Body of pancreas (tissue), 4 donors: ENCODE measurements at regions of chr5 and their contacts with region 1.

Region 1: DNA sequence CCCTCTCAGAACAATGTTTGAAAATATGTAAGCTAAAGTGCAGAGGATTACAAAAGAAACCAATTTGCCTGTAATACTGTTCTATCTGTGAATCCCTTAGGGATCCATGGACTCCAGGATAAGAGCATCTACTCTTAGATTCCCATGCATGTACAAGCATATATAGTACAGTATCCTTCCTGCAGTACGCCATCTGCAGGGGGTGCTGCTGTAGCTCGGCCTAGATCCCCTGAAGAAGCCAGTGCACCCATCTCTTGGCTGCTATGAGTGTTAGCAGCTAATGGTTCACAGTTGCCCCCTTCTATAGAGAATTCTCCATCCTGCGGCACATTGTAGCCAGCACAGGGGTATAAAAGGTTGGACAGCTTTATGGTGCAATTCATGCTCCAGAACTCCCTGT is 61.8 kb upstream of the SLC30A5 start:
- DNase-seq: no peak
- ATAC-seq: no peak
- H3K4me3 ChIP-seq: no peak overlapping the region
- H3K27ac ChIP-seq: no peak overlapping the region
- H3K4me1 ChIP-seq: no peaks in the 10 kb centered on the region
- H3K27me3 ChIP-seq: no peaks in the 10 kb centered on the region
- CTCF ChIP-seq: no peak
- POLR2A ChIP-seq: no peak

Region 2: GRCh38 chr5:69093771-69094482 is 61.9 kb after region 1 on chr5 and contains the start of gene SLC30A5:
- intact Hi-C with region 1: no loop called
- DNase-seq: peak; percentile 99 to 100 (median 100)
- ATAC-seq: peak; percentile 99
- H3K4me3 ChIP-seq: peak within 1 kb of the TSS; percentile 77 to 85
- H3K27ac ChIP-seq: peak within 1 kb of the TSS; percentile 88 to 98 (median 96)
- H3K4me1 ChIP-seq: peaks cover 30% of the 10 kb centered on the region
- H3K27me3 ChIP-seq: no peaks in the 10 kb centered on the region
- CTCF ChIP-seq: peak; percentile 83 to 100 (median 99)
- POLR2A ChIP-seq: peak; percentile 95 to 97 (median 96)
- total RNA-seq, gene SLC30A5: 30.3 to 35.0 TPM

Region 3: GRCh38 chr5:69334793-69335268 is 302.8 kb after region 1 on chr5:
- intact Hi-C with region 1: loop called (anchors 10 kb)
- DNase-seq: peak; percentile 90 to 95 (median 91)
- ATAC-seq: peak; percentile 80
- H3K4me3 ChIP-seq: no peak overlapping the region
- H3K27ac ChIP-seq: peak overlapping the region in 3 of 4 donors; percentile 67 to 88 (median 86)
- H3K4me1 ChIP-seq: peaks cover 37% of the 10 kb centered on the region
- H3K27me3 ChIP-seq: no peaks in the 10 kb centered on the region
- CTCF ChIP-seq: peak; percentile 71 to 92 (median 88)
- POLR2A ChIP-seq: peak in 1 of 3 donors; percentile 48